Cardiac septum (tissue), 1 donor: ENCODE measurements at regions of chr1 and their contacts with region 1.

Region 1: GRCh38 chr1:6393400-6394187 is at the start of gene ACOT7:
- DNase-seq: peak; percentile 93
- total RNA-seq, gene ACOT7: 13.8 TPM

Region 2: DNA sequence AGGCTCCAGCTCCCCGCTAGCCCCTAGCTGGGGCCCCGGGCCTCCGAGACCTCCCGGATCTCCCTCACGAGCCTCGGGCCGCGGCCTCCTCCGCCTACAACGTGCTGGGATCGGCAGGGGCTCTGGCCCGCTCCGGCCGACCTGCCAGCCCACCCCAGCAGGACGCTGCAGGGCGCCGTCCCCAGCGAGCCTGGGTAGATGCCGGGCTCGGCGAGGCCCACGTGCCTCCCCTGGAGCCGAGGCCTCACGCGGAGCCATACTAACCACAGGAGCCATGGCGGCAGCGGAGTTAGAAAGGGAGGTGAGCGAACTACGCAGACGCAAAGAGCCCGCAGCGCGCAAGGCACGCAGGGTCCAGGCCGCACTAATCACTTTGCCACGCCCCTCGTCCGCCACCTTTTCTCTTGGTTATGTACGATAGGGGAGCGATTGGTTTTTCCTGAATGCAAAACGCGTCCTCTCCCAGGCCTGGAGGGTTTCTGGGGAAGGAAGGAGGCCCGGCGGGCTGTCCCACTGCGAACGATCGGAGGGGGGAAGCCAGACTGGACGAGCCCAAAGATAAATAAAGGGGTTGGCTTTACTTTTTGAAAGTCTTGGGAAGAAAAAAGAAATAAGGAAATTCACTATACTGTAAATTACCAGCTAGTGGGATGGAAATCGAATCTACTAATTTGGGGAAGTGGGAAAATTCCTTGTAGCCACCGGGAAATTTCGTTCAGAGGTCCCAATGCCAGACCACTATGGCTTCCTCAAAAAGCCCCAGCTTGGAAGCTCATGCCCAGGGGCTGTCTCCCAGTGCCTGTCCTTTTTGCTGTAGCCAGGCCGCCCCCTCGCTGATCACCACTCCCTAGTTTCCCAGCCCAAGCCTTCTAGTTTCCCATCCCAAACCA is 194.1 kb before region 1 on chr1 and contains the start of gene RPL22:
- intact Hi-C with region 1: loop called (anchors 5 kb)
- DNase-seq: peak; percentile 97
- total RNA-seq, gene RPL22: 205 TPM

Region 3: GRCh38 chr1:6359216-6360116 is 34.1 kb before region 1 on chr1:
- intact Hi-C with region 1: loop called (anchors 2 kb)
- DNase-seq: peak; percentile 83

Region 4: DNA sequence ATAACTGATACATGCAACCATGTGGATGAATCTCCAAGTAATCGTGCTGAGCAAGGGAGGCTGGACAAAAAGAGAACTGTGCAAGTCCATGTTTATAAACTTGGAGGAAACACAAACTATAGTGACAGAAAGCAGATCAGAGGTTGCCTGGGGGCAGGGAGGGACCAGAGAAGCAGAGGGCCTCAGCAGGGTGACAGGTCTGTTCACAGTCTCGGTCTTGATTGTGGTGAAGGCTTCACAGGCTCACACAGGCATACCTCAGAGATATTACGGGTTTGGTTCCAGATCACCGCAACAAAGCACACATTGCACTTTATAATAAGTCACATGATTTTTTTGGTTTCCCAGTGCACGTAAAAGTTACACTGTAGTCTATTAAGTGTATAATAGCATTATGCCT is 28.5 kb before region 1 on chr1:
- intact Hi-C with region 1: loop called (anchors 2 kb)
- DNase-seq: no peak

Region 5: GRCh38 chr1:6438047-6438525 is 44.5 kb after region 1 on chr1:
- intact Hi-C with region 1: no loop called
- DNase-seq: peak; percentile 83

Region 6: DNA sequence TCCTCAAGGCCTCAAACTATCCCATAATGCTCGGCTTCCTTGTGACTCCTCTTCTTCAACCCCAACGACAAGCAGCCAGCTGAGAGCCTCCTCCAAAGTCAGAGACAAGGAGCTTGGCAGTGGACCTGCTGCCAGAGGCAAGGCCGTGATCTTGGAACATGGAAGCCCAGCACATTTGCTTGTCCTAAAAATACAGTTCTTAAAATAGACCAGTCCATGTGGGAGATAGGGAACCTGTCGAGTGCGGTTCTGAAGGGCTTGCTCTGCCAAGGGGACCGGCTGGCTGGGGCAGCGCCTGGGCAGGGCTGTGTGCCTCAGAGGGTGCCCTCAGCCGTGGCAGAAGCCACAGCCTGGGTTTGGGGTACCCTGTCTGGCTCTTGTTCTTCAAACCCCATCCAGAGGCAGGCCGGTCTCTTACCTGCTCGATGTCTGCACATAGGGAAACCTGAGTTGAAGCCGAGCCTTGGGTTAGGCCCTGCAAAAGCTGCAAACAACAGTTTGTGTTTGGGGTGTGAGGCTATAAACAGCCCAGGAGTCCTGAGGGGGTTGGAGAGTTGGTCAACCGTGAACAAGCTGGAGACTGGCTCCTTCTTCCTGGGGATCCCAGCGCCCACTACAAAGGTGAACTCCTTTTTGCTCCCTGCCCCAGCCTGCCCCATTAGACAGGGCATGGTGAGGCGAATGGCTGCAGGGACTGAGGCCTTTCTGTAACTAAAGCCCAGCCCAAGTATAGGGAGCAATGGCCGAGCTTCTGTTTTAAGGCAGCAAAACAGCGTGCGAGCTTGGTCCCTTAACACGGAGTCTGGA is 620.4 kb after region 1 on chr1:
- intact Hi-C with region 1: no loop called
- DNase-seq: peak; percentile 85